ENCODE measurements at regions of chr9 and their contacts with region 1.

Region 1: DNA sequence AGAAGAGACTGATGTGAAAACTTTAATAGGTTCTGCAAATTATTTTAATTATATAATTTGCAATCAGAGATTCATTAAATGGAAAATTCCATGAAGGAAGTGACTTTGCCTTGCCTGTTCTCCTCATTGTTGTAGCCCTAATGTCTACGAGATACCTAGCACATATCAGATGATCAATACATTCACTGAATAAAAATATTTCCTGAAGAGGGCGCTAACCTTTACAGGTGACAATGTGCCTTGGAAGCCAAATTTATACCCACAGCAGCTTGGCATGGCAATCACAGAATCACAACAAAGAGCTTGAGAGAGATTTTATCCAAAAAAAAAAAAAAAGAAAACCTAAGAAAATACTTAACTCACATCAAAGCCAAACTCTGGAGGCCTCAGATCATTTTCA is 17.4 kb downstream of the HAUS6 start:
- DNase-seq: no peak
- H3K4me3 Mint-ChIP-seq: no peak overlapping the region
- H3K27ac Mint-ChIP-seq: peak overlapping the region; percentile 18
- H3K4me1 Mint-ChIP-seq: peaks cover 4% of the 10 kb centered on the region
- H3K27me3 Mint-ChIP-seq: no peaks in the 10 kb centered on the region

Region 2: DNA sequence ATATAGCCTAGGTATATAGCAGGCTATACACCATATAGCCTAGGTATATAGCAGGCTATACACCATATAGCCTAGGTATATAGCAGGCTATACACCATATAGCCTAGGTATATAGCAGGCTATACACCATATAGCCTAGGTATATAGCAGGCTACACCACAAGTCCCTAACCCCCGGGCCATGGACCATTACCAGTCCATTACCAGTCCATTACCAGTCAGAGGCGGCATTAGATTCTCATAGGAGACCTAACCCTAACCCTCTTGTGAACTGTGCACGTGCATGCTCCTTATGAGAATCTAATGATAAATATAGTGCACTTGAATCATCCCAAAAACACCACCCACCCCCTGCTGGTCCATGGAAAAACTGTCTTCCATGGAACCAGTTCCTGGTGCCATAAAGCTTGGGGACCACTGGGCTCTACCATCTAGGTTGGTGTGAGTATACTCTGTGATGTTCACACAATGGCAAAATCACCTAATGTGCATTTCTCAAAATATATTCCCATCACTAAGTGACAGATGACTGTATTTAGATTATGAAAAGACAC is 37.3 kb after region 1 on chr9:
- intact Hi-C with region 1: loop called (anchors 5 kb)
- DNase-seq: no peak
- H3K4me3 Mint-ChIP-seq: no peak overlapping the region
- H3K27ac Mint-ChIP-seq: peak overlapping the region; percentile 49
- H3K4me1 Mint-ChIP-seq: peaks cover 45% of the 10 kb centered on the region
- H3K27me3 Mint-ChIP-seq: no peaks in the 10 kb centered on the region

Region 3: DNA sequence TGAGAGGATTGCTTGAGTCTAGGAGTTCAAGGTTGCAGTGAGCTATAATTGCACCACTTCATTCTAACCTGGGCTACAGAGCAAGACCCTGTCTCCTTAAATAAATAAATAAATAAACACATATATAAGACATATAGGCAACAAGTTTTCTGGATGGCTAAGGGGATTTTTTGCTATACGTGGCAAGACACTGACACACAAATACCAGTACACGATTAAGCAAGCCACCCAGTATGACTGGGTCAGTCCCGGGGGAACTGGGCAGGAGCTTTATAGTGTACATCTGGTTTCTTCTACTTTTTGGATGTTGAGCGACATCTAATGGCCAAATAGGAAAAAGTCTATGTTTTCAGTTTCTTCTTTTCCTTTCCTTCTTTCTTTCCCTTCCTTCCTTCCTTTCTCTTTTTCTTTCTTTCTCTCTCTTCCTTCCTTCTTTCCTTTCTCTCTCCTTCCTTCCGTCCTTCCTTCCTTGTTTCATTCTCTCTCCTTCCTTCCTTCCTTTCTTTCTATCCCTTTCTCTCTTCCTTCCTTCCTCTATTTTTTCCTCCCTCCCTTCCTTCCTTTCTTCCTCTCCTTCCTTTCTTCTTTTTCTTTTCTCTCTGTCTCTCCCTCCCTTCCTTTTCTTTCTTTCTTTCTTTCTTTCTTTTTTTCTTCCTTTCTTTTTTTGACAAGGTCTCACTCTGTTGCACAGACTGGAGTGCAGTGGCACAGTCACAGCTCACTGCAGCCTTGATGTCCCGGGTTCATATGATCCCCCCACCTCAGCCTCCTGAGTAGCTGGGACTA is 89.0 kb after region 1 on chr9:
- intact Hi-C with region 1: loop called (anchors 1 kb)
- DNase-seq: peak; percentile 21
- H3K4me3 Mint-ChIP-seq: peak overlapping the region; percentile 9
- H3K27ac Mint-ChIP-seq: peak overlapping the region; percentile 46
- H3K4me1 Mint-ChIP-seq: peaks cover 29% of the 10 kb centered on the region
- H3K27me3 Mint-ChIP-seq: no peaks in the 10 kb centered on the region

Measured in activated T-helper 2 cell treated with anti-CD3 and anti-CD28 coated beads, Interferon-gamma antibody, Interleukin-2, Interleukin-4, amounts not matched to agents 10 μg/mL and 5 μg/mL and 100 μg/mL, durations not matched to agents 14 hours and 24 hours and 36 hours (primary cell).